ENCODE measurements at regions of chr3 and their contacts with region 1.

Region 1: DNA sequence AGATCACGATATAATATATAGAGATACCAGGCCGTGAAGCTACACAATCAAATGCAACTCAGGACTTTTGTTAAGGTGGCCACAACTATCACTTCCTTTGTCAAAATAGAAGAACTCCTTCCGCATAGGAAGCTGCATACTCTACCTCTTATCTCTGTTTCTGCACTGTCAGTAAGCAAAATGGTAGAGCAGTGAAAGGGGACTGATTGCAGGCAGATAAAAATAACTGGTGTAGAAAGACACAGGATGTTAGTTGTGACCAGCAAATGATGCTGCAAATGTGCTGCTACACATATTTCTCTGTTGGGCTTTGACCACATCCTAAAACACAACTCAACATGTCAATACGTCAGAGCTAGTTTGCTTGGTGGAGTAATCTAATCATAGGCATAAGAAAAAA is 16.3 kb upstream of the TRAT1 start:
- DNase-seq: peak in 6 of 14 experiments; percentile 3 to 93 (median 60)
- ATAC-seq: peak; percentile 95
- H3K4me3 ChIP-seq: no peak overlapping the region
- H3K4me3 Mint-ChIP-seq: peak overlapping the region; percentile 2
- H3K27ac ChIP-seq: no peak overlapping the region
- H3K27ac Mint-ChIP-seq: peak overlapping the region; percentile 76
- H3K4me1 ChIP-seq: peaks cover 8% of the 10 kb centered on the region
- H3K4me1 Mint-ChIP-seq: peaks cover 33% of the 10 kb centered on the region
- H3K27me3 ChIP-seq: no peaks in the 10 kb centered on the region
- H3K27me3 Mint-ChIP-seq: no peaks in the 10 kb centered on the region
- CTCF ChIP-seq: no peak

Region 2: GRCh38 chr3:108698461-108698860 is 107.9 kb before region 1 on chr3:
- CTCF ChIA-PET with region 1: no interaction called
- POLR2A ChIA-PET with region 1: no interaction called
- intact Hi-C with region 1: no loop called
- DNase-seq: no peak
- ATAC-seq: no peak
- H3K4me3 ChIP-seq: no peak overlapping the region
- H3K4me3 Mint-ChIP-seq: no peak overlapping the region
- H3K27ac ChIP-seq: no peak overlapping the region
- H3K27ac Mint-ChIP-seq: no peak overlapping the region
- H3K4me1 ChIP-seq: no peaks in the 10 kb centered on the region
- H3K4me1 Mint-ChIP-seq: no peaks in the 10 kb centered on the region
- H3K27me3 ChIP-seq: no peaks in the 10 kb centered on the region
- H3K27me3 Mint-ChIP-seq: no peaks in the 10 kb centered on the region
- CTCF ChIP-seq: no peak

Region 3: DNA sequence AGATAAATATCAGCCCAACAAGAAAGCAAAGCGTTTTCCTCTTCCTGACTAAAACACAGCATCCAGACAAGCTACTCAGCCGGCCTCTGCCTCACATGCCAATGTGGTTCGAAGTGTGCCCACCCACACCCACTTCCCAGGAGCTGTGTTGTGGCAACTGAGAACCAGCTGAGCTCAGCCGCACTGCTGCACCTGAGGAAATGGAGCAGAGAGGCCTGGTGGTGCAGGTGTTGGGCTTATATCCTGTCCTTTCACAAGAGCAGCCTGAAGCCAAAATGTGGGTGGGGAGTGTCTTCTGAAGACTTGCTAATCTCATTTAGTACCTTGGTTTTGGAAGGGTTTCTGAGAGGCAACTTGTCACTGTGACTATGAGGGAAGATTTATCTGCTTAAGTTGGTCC is 26.1 kb before region 1 on chr3:
- CTCF ChIA-PET with region 1: interaction called, 3 read pairs
- POLR2A ChIA-PET with region 1: interaction called, 3 read pairs
- intact Hi-C with region 1: loop called in 1 of 2 experiments (anchors 2 kb)
- DNase-seq: peak in 11 of 14 experiments; percentile 7 to 75 (median 21)
- ATAC-seq: peak; percentile 88
- H3K4me3 ChIP-seq: no peak overlapping the region
- H3K4me3 Mint-ChIP-seq: no peak overlapping the region
- H3K27ac ChIP-seq: no peak overlapping the region
- H3K27ac Mint-ChIP-seq: peak overlapping the region; percentile 43
- H3K4me1 ChIP-seq: peaks cover 10% of the 10 kb centered on the region
- H3K4me1 Mint-ChIP-seq: peaks cover 45% of the 10 kb centered on the region
- H3K27me3 ChIP-seq: no peaks in the 10 kb centered on the region
- H3K27me3 Mint-ChIP-seq: no peaks in the 10 kb centered on the region
- CTCF ChIP-seq: no peak

Measured in CD4-positive, alpha-beta T cell (primary cell).